ENCODE measurements at regions of chr2 and their contacts with region 1.

Region 1: GRCh38 chr2:195656859-195657633 is at the start of gene SLC39A10:
- DNase-seq: peak; percentile 100
- H3K4me3 Mint-ChIP-seq: peak within 1 kb of the TSS; percentile 86
- H3K27ac Mint-ChIP-seq: peak within 1 kb of the TSS; percentile 97
- H3K4me1 Mint-ChIP-seq: peaks cover 20% of the 10 kb centered on the region
- H3K27me3 Mint-ChIP-seq: no peaks in the 10 kb centered on the region
- total RNA-seq, gene SLC39A10: 33.4 and 37.1 TPM in 2 replicates

Region 2: DNA sequence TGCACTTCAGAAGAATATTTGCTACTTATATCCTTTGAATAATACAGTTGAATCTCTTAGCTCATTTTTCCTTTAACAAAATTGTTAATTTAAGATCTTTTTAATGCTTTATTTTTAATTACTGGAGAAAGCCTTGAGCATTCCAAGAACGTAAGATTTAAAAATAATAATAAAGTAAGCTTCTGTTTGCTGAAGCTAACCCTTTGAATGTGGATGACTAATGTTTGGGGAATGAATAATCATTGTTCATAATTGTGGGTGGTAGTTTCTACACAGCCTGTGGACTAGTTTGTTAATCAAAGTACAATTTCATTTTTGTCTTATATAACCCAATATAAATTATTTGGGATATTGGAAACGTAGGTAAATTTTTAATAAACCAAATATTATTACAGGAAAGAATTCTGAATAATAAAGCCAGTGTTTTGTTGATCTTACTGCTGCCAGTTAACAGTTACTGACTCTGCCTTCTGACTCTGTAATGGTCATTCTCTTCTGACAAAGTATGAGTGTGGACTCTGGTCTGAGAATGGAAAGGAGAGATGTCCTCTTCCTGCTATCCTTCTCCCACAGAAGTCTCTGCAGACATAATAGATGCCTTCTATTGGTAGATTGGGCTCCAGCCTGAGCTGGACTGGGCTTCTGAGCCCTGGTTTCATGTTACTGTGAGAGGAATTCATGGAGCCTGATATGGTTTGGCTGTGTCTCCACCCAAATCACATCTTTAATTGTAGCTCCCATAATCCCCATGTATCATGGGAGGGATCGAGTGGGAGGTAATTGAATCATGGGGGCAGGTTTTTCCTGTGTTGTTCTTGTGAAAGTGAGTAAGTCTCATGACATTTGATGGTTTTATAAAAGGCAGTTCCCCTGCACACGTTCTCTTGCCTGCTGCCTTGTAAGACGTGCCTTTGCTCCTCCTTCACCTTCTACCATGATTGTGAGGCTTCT is 292.8 kb before region 1 on chr2:
- intact Hi-C with region 1: loop called (anchors 5 kb)
- DNase-seq: no peak
- H3K4me3 Mint-ChIP-seq: no peak overlapping the region
- H3K27ac Mint-ChIP-seq: peak overlapping the region; percentile 40
- H3K4me1 Mint-ChIP-seq: peaks cover 21% of the 10 kb centered on the region
- H3K27me3 Mint-ChIP-seq: no peaks in the 10 kb centered on the region

Region 3: DNA sequence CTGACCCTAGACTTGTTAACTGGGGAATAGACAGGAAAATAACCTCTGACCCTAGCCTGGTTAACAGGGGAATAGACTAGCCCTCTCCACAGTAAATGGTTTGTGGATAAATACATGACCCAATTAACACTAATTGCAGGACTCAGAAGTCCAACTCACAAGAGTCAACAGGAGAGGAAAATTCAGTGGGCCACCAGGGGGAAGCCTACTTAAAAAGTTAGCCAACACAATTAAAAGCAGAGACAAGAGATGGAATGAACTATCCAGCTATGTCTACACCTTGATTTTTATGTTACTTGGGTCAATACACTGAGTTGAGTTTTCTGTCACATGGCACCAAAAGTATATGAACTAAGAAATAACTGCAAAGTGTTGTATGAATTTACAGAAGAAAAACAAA is 158.9 kb before region 1 on chr2:
- intact Hi-C with region 1: loop called (anchors 1 kb)
- DNase-seq: peak; percentile 78
- H3K4me3 Mint-ChIP-seq: no peak overlapping the region
- H3K27ac Mint-ChIP-seq: peak overlapping the region; percentile 10
- H3K4me1 Mint-ChIP-seq: peaks cover 38% of the 10 kb centered on the region
- H3K27me3 Mint-ChIP-seq: no peaks in the 10 kb centered on the region

Region 4: DNA sequence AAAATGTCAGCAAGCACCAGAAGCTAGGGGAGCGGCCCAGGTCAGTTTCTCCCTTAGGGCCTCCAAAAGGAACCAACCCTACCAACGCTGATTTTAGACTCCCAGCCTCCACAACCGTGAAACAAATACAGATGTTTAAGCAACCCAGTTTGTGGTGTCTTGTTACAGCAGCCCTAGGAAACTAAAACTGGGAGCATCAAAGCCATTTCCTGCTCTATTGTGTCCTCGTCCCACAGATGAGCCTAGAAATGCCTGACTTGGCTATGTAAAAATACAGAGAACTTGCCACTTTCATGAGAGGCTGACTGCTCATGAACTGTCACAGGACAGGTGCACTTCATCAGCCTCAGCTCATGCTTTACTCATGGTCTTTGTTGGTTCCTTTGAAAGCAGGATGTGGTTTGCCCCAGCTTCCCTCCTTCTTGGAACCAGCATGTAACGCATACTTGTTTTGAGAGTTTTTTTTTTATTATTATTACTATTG is 97.6 kb before region 1 on chr2:
- intact Hi-C with region 1: loop called (anchors 1 kb)
- DNase-seq: peak; percentile 95
- H3K4me3 Mint-ChIP-seq: peak overlapping the region; percentile 81
- H3K27ac Mint-ChIP-seq: peak overlapping the region; percentile 97
- H3K4me1 Mint-ChIP-seq: peaks cover 51% of the 10 kb centered on the region
- H3K27me3 Mint-ChIP-seq: no peaks in the 10 kb centered on the region

Region 5: GRCh38 chr2:195672668-195673067 is 15.6 kb after region 1 on chr2:
- intact Hi-C with region 1: no loop called
- DNase-seq: no peak
- H3K4me3 Mint-ChIP-seq: no peak overlapping the region
- H3K27ac Mint-ChIP-seq: no peak overlapping the region
- H3K4me1 Mint-ChIP-seq: peaks cover 5% of the 10 kb centered on the region
- H3K27me3 Mint-ChIP-seq: no peaks in the 10 kb centered on the region

Region 6: GRCh38 chr2:196068271-196069209 is 411.5 kb after region 1 on chr2 and contains the start of gene DNAH7:
- intact Hi-C with region 1: loop called (anchors 2 kb)
- DNase-seq: peak; percentile 98
- H3K4me3 Mint-ChIP-seq: peak within 1 kb of the TSS; percentile 88
- H3K27ac Mint-ChIP-seq: peak within 1 kb of the TSS; percentile 81
- H3K4me1 Mint-ChIP-seq: peaks cover 7% of the 10 kb centered on the region
- H3K27me3 Mint-ChIP-seq: peaks cover 26% of the 10 kb centered on the region
- total RNA-seq, gene DNAH7: not detected in 2 replicates

Region 7: GRCh38 chr2:196263181-196263747 is 606.2 kb after region 1 on chr2:
- intact Hi-C with region 1: loop called (anchors 5 kb)
- DNase-seq: peak; percentile 89
- H3K4me3 Mint-ChIP-seq: peak overlapping the region; percentile 72
- H3K27ac Mint-ChIP-seq: peak overlapping the region; percentile 93
- H3K4me1 Mint-ChIP-seq: peaks cover 58% of the 10 kb centered on the region
- H3K27me3 Mint-ChIP-seq: no peaks in the 10 kb centered on the region